Activated B cell treated with CpG ODN at 0.5 μM for 24 hours (primary cell): ENCODE measurements at regions of chr9 and their contacts with region 1.

Region 1: GRCh38 chr9:35814841-35815543 is at the start of gene HINT2:
- DNase-seq: peak; percentile 90
- ATAC-seq: peak; percentile 83
- H3K4me3 Mint-ChIP-seq: peak within 1 kb of the TSS; percentile 98
- H3K27ac Mint-ChIP-seq: peak within 1 kb of the TSS; percentile 99
- H3K4me1 Mint-ChIP-seq: peaks cover 36% of the 10 kb centered on the region
- H3K27me3 Mint-ChIP-seq: no peaks in the 10 kb centered on the region
- CTCF ChIP-seq: no peak
- total RNA-seq, gene HINT2: 27.9 and 34.0 TPM in 2 replicates

Region 2: GRCh38 chr9:35071814-35072460 is 743.1 kb before region 1 on chr9:
- CTCF ChIA-PET with region 1: no interaction called
- POLR2A ChIA-PET with region 1: no interaction called
- intact Hi-C with region 1: loop called (anchors 1 kb)
- DNase-seq: peak; percentile 80
- ATAC-seq: peak; percentile 63
- H3K4me3 Mint-ChIP-seq: peak overlapping the region; percentile 89
- H3K27ac Mint-ChIP-seq: peak overlapping the region; percentile 93
- H3K4me1 Mint-ChIP-seq: peaks cover 51% of the 10 kb centered on the region
- H3K27me3 Mint-ChIP-seq: no peaks in the 10 kb centered on the region
- CTCF ChIP-seq: no peak

Region 3: GRCh38 chr9:35452481-35452880 is 362.5 kb before region 1 on chr9:
- CTCF ChIA-PET with region 1: no interaction called
- POLR2A ChIA-PET with region 1: no interaction called
- intact Hi-C with region 1: no loop called
- DNase-seq: no peak
- ATAC-seq: no peak
- H3K4me3 Mint-ChIP-seq: no peak overlapping the region
- H3K27ac Mint-ChIP-seq: no peak overlapping the region
- H3K4me1 Mint-ChIP-seq: no peaks in the 10 kb centered on the region
- H3K27me3 Mint-ChIP-seq: peaks cover 38% of the 10 kb centered on the region
- CTCF ChIP-seq: no peak

Region 4: GRCh38 chr9:35603987-35604577 is 210.9 kb before region 1 on chr9:
- CTCF ChIA-PET with region 1: no interaction called
- POLR2A ChIA-PET with region 1: no interaction called
- intact Hi-C with region 1: loop called (anchors 1 kb)
- DNase-seq: peak; percentile 95
- ATAC-seq: peak; percentile 90
- H3K4me3 Mint-ChIP-seq: peak overlapping the region; percentile 97
- H3K27ac Mint-ChIP-seq: peak overlapping the region; percentile 97
- H3K4me1 Mint-ChIP-seq: peaks cover 37% of the 10 kb centered on the region
- H3K27me3 Mint-ChIP-seq: no peaks in the 10 kb centered on the region
- CTCF ChIP-seq: peak; percentile 76

Region 5: DNA sequence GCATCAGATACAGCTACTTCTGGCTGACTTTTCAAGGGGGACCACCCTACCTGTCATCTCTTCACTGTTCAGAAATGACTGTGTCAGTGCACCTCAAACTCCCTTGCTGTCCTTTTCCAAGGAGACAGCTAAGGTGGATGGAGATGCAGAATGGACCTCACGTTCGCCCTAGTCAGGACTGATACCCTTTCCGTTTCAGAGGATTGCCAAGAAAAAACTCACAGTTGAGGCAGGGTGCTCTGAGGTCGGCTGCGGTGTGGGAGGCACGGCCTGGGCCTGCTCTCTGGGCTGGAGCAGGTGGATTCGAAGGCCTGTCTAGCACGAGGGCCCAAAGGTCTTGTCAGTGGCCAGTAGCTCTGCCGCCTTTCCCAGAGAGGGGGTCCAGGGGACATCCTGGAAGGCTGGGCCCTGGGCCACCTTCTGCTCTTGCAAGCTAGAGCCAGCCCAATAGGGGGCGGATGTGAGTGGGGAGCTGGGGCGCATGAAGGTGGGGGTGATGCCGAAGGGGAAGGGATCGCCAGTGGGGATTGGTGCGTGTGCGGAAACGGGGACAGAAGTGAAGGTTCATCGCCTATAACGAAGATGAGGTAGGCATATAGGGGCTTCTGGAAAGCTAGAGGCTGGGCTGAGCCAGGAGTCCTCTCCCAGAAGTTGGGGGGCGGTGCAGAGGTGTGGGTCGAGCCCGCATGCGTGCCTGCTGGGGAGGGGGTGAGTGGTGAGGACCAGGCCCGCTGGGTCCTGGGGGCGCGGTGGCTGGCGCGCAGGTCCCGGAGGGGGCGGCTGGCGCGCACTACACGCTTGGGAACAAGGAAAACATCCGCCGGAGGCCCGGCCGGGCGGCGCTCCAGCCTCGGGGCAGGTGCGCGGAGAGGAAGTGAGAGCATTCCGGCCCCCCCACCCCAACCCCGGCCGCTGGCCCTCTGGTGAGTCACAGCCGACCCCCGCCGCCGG is 58.4 kb before region 1 on chr9:
- CTCF ChIA-PET with region 1: no interaction called
- POLR2A ChIA-PET with region 1: interaction called, 6 read pairs
- intact Hi-C with region 1: loop called (anchors 1 kb)
- DNase-seq: peak; percentile 68
- ATAC-seq: peak; percentile 73
- H3K4me3 Mint-ChIP-seq: peak overlapping the region; percentile 91
- H3K27ac Mint-ChIP-seq: peak overlapping the region; percentile 93
- H3K4me1 Mint-ChIP-seq: peaks cover 55% of the 10 kb centered on the region
- H3K27me3 Mint-ChIP-seq: no peaks in the 10 kb centered on the region
- CTCF ChIP-seq: no peak

Region 6: DNA sequence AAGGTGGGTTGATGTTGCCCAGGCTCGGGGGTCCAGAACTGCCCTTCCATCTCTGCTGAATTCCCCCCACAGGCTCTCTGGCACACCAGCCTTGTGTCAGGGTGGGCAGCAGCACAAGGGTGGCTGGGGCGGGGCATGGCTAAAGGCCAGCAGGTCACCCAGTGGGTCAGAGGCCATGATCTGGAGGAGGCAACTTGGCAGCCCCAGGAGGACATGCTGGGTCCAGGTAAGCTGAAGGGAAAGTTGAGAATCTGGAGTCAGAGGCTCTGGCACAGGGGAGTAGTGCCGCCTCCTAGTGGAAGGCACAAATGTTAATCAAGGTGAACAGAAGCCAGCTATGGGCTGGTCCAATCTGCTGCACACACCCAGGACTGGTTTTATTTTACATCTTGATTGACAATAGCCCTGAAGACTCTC is 20.2 kb after region 1 on chr9:
- CTCF ChIA-PET with region 1: no interaction called
- POLR2A ChIA-PET with region 1: interaction called, 11 read pairs
- intact Hi-C with region 1: no loop called
- DNase-seq: no peak
- ATAC-seq: no peak
- H3K4me3 Mint-ChIP-seq: no peak overlapping the region
- H3K27ac Mint-ChIP-seq: no peak overlapping the region
- H3K4me1 Mint-ChIP-seq: peaks cover 35% of the 10 kb centered on the region
- H3K27me3 Mint-ChIP-seq: no peaks in the 10 kb centered on the region
- CTCF ChIP-seq: no peak

Region 7: DNA sequence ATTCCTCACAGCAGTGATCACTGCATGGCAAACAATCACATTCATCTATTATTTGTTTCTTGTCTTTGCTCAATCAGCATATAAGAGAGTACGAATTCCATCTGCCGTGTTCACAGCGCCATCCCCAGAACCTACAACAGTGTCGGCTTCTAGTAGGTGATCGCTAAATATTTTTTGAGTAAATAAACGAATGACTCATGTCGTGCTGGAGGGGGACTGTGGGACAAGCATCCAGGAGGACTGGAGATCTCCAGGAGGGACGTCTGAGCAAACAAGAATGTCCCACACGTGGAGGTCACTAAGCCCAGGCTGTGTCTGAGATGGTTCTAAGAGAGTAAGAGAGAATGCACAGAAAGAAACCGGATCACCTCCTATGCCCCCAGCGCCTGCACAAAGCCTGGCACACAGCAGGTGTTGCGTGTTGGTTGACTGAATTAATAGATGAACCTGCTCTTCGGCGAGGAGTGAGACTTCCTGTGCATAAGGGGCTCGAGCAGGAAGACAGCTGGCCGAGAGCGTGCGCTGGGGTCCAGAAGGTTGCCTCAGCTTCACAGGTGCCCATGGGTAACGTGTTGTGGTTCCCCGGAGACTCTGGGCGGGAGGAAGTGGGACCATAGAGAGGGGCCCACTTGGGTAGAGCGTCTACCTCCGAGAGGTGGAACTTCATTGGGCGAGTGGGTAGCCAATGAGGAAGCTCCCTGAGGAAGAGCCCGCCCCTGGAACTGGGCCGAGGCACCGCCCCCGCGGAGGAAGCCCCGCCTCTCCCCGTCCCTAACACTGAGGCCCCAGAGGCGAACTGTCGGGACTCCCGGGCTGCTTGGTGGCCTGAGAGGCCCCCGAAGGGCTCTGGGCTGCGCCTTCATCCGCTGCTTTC is 950.7 kb after region 1 on chr9:
- CTCF ChIA-PET with region 1: no interaction called
- POLR2A ChIA-PET with region 1: no interaction called
- intact Hi-C with region 1: loop called (anchors 5 kb)
- DNase-seq: peak; percentile 89
- ATAC-seq: peak; percentile 98
- H3K4me3 Mint-ChIP-seq: no peak overlapping the region
- H3K27ac Mint-ChIP-seq: no peak overlapping the region
- H3K4me1 Mint-ChIP-seq: no peaks in the 10 kb centered on the region
- H3K27me3 Mint-ChIP-seq: peaks cover 17% of the 10 kb centered on the region
- CTCF ChIP-seq: no peak